ENCODE measurements at regions of chr1 and their contacts with region 1.

Region 1: DNA sequence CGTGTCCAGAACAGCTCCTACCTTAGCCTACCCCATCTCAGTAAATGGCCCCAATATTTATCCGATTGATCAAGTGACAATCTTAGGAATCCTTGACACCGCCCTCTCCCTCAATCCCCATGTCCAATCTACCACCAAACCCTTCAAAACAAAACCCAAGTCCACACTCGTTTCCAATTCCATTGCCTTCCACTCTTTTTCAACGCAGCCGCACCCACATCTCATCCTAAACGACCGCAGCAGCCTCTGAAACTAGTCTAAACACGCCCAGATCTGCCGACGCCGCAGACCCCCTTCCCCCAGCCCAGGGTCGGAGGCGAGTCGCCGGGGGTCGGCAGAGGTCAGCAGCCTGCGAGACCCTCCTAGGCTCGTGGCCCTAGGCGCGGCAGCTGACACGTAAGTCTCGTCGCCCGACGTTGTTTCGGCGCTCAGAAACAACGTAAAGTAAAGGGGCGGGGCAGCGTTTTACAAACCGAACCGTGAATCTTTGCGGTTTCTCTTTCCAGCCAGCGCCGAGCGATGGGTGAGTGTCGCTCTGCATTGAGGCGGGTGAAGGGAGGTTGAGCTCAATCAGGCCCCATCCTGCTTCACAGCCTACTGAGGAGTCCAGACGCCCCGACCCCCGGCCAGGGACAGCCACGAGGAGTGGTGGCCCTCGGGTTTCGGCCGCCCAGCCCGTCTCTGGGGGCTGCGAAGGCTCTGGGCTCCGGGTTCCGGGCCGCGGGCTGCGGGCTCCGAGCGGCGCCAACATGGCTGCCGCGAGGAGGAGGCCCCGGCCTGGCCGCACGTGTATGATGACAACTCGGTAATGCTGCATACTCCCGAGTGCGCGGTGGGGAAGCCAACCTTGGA is at the start of gene RPS8:
- DNase-seq: peak; percentile 76 to 92 (median 84)
- H3K4me3 ChIP-seq: peak within 1 kb of the TSS; percentile 95
- H3K4me3 Mint-ChIP-seq: peak within 1 kb of the TSS; percentile 90 to 99 (median 94)
- H3K27ac ChIP-seq: peak within 1 kb of the TSS; percentile 92
- H3K27ac Mint-ChIP-seq: peak within 1 kb of the TSS; percentile 93 to 99 (median 97)
- H3K4me1 ChIP-seq: peaks cover 27% of the 10 kb centered on the region
- H3K4me1 Mint-ChIP-seq: peaks cover 39 to 43% (median 42%) of the 10 kb centered on the region in 3 donors
- H3K27me3 ChIP-seq: no peaks in the 10 kb centered on the region
- H3K27me3 Mint-ChIP-seq: no peaks in the 10 kb centered on the region
- total RNA-seq, gene RPS8: 2,426 to 2,465 TPM

Region 2: GRCh38 chr1:44721485-44722361 is 53.6 kb before region 1 on chr1:
- CTCF ChIA-PET with region 1: interaction called, 4 read pairs
- POLR2A ChIA-PET with region 1: interaction called, 11 read pairs
- DNase-seq: peak; percentile 38 to 82 (median 75)
- H3K4me3 ChIP-seq: no peak overlapping the region
- H3K4me3 Mint-ChIP-seq: peak overlapping the region; percentile 44 to 85 (median 73)
- H3K27ac ChIP-seq: peak overlapping the region; percentile 69
- H3K27ac Mint-ChIP-seq: peak overlapping the region; percentile 81 to 97 (median 94)
- H3K4me1 ChIP-seq: peaks cover 56% of the 10 kb centered on the region
- H3K4me1 Mint-ChIP-seq: peaks cover 50 to 77% (median 58%) of the 10 kb centered on the region in 3 donors
- H3K27me3 ChIP-seq: no peaks in the 10 kb centered on the region
- H3K27me3 Mint-ChIP-seq: no peaks in the 10 kb centered on the region

Region 3: DNA sequence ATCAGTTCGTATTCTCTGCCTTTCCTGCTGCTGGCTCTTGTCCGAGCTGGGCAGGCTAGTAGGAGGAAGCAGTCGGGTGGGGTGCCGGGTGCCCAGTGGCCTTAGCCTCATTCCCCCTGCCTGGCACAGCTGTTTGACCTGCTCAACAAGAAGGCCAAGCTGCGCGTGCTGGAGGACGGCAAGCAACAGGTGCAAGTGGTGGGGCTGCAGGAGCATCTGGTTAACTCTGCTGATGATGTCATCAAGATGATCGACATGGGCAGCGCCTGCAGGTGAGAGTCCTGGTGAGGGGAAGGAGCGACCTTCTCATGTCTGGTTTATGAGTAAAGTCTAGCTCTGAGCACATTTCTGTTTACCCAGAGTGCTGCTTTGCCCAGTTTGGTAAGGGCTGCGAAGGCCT is 16.2 kb before region 1 on chr1:
- CTCF ChIA-PET with region 1: no interaction called
- POLR2A ChIA-PET with region 1: no interaction called
- DNase-seq: no peak
- H3K4me3 ChIP-seq: no peak overlapping the region
- H3K4me3 Mint-ChIP-seq: no peak overlapping the region
- H3K27ac ChIP-seq: no peak overlapping the region
- H3K27ac Mint-ChIP-seq: peak overlapping the region in 1 of 8 donors; percentile 66
- H3K4me1 ChIP-seq: no peaks in the 10 kb centered on the region
- H3K4me1 Mint-ChIP-seq: peaks cover 4 to 6% (median 4%) of the 10 kb centered on the region in 3 donors
- H3K27me3 ChIP-seq: no peaks in the 10 kb centered on the region
- H3K27me3 Mint-ChIP-seq: no peaks in the 10 kb centered on the region

Region 4: DNA sequence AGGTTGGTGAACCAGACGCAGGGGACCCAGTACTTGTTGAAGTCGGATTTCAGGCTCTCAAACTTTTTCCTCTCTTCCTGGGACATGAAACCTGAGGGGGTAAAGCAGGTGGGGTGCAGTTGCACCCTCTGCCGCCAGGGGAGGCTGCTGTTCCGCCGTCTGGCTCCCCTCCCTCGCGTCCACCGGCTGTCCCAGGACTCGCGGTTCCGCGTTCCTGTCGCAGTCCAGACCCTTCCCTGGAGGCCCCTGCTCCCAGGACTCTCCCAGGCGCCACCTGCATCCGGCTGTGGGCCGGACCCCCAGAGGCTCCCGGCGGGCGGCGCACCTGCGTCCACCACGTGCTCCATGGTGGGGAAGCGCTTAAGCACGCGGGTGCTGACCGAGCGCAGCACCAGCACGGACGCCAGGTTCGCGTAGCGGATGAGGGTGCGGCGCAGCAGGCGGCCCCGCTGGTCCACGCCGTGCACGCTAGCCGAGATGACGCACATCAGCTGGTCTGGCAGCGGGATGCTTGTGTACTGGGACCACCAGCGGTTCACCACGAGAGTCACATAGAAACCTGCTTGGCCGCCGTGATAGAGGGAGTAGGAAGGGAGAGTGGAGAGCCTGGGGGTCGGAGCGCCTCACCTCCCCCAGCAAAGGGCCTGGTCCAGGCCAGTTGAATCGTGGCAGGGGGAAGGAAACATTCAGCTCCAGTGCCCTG is 11.0 kb after region 1 on chr1:
- CTCF ChIA-PET with region 1: interaction called, 26 read pairs
- POLR2A ChIA-PET with region 1: interaction called, 49 read pairs
- DNase-seq: peak; percentile 71 to 83 (median 77)
- H3K4me3 ChIP-seq: peak overlapping the region; percentile 74
- H3K4me3 Mint-ChIP-seq: peak overlapping the region; percentile 76 to 93 (median 81)
- H3K27ac ChIP-seq: no peak overlapping the region
- H3K27ac Mint-ChIP-seq: peak overlapping the region; percentile 77 to 98 (median 87)
- H3K4me1 ChIP-seq: peaks cover 29% of the 10 kb centered on the region
- H3K4me1 Mint-ChIP-seq: peaks cover 27 to 36% (median 30%) of the 10 kb centered on the region in 3 donors
- H3K27me3 ChIP-seq: no peaks in the 10 kb centered on the region
- H3K27me3 Mint-ChIP-seq: no peaks in the 10 kb centered on the region

Region 5: GRCh38 chr1:44807262-44808062 is 32.2 kb after region 1 on chr1 and contains the start of gene DYNLT4:
- CTCF ChIA-PET with region 1: interaction called, 3 read pairs
- POLR2A ChIA-PET with region 1: interaction called, 24 read pairs
- DNase-seq: peak; percentile 84 to 95 (median 90)
- H3K4me3 ChIP-seq: peak within 1 kb of the TSS; percentile 58
- H3K4me3 Mint-ChIP-seq: peak within 1 kb of the TSS; percentile 67 to 90 (median 84)
- H3K27ac ChIP-seq: peak within 1 kb of the TSS; percentile 96
- H3K27ac Mint-ChIP-seq: peak within 1 kb of the TSS; percentile 97 to 100 (median 100)
- H3K4me1 ChIP-seq: peaks cover 77% of the 10 kb centered on the region
- H3K4me1 Mint-ChIP-seq: peaks cover 65 to 80% (median 71%) of the 10 kb centered on the region in 3 donors
- H3K27me3 ChIP-seq: no peaks in the 10 kb centered on the region
- H3K27me3 Mint-ChIP-seq: peaks cover 0 to 6% of the 10 kb centered on the region in 2 donors
- total RNA-seq, gene DYNLT4: 0.28 to 0.31 TPM

Region 6: DNA sequence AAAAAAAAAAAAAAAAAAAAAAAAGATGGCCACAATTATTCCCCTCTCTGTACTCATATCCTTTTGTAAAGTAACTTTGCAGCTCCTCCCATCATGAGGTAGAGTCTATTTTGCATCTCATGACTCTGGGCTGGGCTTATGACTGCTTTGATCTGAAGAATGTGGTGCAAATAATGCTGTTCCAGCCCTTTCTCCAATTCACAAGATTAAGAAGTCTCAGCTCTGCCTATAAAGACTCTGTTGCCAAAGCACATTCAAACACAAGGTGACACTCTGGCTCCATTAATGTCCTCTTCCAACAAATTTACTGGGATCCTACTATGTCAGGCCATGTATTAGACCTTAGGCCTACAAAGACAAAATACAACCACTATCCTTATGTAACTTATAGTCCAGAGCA is 132.6 kb after region 1 on chr1:
- CTCF ChIA-PET with region 1: no interaction called
- POLR2A ChIA-PET with region 1: no interaction called
- DNase-seq: no peak
- H3K4me3 ChIP-seq: no peak overlapping the region
- H3K4me3 Mint-ChIP-seq: no peak overlapping the region
- H3K27ac ChIP-seq: no peak overlapping the region
- H3K27ac Mint-ChIP-seq: peak overlapping the region in 1 of 8 donors; percentile 57
- H3K4me1 ChIP-seq: no peaks in the 10 kb centered on the region
- H3K4me1 Mint-ChIP-seq: no peaks in the 10 kb centered on the region
- H3K27me3 ChIP-seq: no peaks in the 10 kb centered on the region
- H3K27me3 Mint-ChIP-seq: no peaks in the 10 kb centered on the region

Region 7: DNA sequence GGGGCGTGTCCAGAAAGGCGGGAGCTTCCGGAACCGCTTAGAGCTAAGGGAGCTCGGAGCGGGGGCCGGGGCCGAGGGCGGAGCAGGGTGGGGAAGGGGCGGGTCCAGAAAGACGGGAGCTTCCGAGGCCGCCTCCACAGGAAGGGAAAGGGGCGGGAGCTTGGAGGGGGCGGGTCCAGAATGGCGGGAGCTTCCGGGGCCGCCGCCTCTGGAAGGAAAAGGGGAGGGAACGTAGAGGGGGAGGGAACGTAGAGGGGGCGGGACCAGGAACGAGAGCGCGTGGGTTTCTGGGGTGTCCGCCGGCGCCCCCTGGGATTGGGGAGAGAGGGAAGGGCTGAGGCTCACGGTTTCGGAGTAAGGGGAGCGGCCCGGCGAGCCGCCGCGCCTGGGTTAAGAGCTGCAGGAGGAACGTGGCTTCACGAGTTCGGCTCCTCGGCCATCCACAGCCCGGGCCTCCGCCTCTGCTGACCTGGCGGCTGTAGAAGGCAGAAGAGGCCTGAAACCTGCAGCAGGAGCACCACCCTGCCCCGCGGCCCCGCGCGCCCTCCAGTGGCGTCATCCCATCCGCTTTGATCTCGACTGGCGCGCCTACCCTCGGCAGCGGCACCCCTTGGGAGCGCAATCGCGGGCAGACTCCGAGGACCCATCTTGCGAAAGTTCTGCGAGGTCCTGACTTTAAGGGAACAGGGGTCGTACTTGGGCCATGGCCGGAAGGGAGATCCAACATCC is 528.4 kb after region 1 on chr1:
- CTCF ChIA-PET with region 1: interaction called, 3 read pairs
- POLR2A ChIA-PET with region 1: interaction called, 11 read pairs
- DNase-seq: peak; percentile 93 to 98 (median 96)
- H3K4me3 ChIP-seq: peak overlapping the region; percentile 63
- H3K4me3 Mint-ChIP-seq: peak overlapping the region; percentile 90 to 97 (median 91)
- H3K27ac ChIP-seq: peak overlapping the region; percentile 88
- H3K27ac Mint-ChIP-seq: peak overlapping the region; percentile 94 to 99 (median 97)
- H3K4me1 ChIP-seq: peaks cover 8% of the 10 kb centered on the region
- H3K4me1 Mint-ChIP-seq: peaks cover 15 to 37% (median 30%) of the 10 kb centered on the region in 3 donors
- H3K27me3 ChIP-seq: no peaks in the 10 kb centered on the region
- H3K27me3 Mint-ChIP-seq: peaks cover 0 to 3% of the 10 kb centered on the region in 2 donors

Measured in CD8-positive, alpha-beta memory T cell (primary cell).